Lower lobe of right lung (tissue), 2 donors: ENCODE measurements at regions of chr9 and their contacts with region 1.

Region 1: DNA sequence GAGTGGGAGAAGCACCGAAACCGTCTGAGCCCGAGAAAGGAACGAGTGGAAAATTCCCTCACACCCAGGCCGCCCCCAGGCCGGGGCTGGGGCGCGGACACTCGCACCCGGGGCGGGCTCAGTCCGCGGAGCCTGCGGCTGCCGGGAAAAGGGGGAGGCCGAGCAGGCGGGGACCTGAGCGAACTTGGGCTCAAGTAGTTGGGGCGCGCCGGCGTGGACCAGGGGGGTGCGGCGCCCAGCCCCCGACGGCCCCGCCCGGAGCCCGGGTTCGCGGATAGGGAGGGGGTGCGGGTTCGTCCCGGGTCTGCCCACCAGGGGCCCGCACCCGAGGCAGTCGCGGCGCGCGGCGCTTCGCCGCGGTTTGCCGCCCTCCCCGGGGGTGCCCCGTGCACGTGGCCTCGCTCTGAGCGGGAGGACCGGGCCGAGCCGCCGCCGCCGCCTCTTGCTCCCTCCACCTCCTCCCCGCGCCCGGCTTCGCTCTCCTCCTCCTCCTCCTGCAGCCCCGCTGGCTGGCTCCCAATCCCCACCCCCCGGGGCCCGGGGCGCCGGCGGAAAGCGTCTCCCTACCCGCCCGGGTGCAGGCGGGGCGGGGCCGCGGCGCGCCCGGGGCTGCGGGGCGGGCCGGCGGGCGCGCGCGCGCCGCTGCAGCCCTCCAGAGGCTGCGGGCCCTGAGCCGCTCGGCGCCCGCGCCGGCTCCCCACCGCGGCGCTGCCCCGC is 1.1 kb upstream of the NFIB start:
- DNase-seq: peak; percentile 93
- ATAC-seq: peak; percentile 82 to 89
- H3K4me3 ChIP-seq: peak overlapping the region; percentile 71
- H3K27ac ChIP-seq: peak overlapping the region; percentile 93
- H3K4me1 ChIP-seq: peaks cover 39% of the 10 kb centered on the region
- H3K27me3 ChIP-seq: no peaks in the 10 kb centered on the region
- CTCF ChIP-seq: no peak

Region 2: GRCh38 chr9:14096258-14096922 is 218.7 kb before region 1 on chr9:
- intact Hi-C with region 1: loop called (anchors 10 kb)
- DNase-seq: no peak
- ATAC-seq: peak; percentile 69 to 91
- H3K4me3 ChIP-seq: peak overlapping the region; percentile 9
- H3K27ac ChIP-seq: peak overlapping the region; percentile 81
- H3K4me1 ChIP-seq: peaks cover 40% of the 10 kb centered on the region
- H3K27me3 ChIP-seq: no peaks in the 10 kb centered on the region
- CTCF ChIP-seq: no peak

Region 3: GRCh38 chr9:14170973-14171596 is 144.0 kb before region 1 on chr9:
- intact Hi-C with region 1: no loop called
- DNase-seq: no peak
- ATAC-seq: no peak
- H3K4me3 ChIP-seq: no peak overlapping the region
- H3K27ac ChIP-seq: no peak overlapping the region
- H3K4me1 ChIP-seq: no peaks in the 10 kb centered on the region
- H3K27me3 ChIP-seq: no peaks in the 10 kb centered on the region
- CTCF ChIP-seq: no peak

Region 4: GRCh38 chr9:14245901-14246525 is 69.1 kb before region 1 on chr9:
- intact Hi-C with region 1: no loop called
- DNase-seq: no peak
- ATAC-seq: no peak
- H3K4me3 ChIP-seq: no peak overlapping the region
- H3K27ac ChIP-seq: no peak overlapping the region
- H3K4me1 ChIP-seq: peaks cover 31% of the 10 kb centered on the region
- H3K27me3 ChIP-seq: no peaks in the 10 kb centered on the region
- CTCF ChIP-seq: no peak

Region 5: GRCh38 chr9:14561929-14562405 is 246.9 kb after region 1 on chr9:
- intact Hi-C with region 1: no loop called
- DNase-seq: no peak
- ATAC-seq: no peak
- H3K4me3 ChIP-seq: no peak overlapping the region
- H3K27ac ChIP-seq: no peak overlapping the region
- H3K4me1 ChIP-seq: no peaks in the 10 kb centered on the region
- H3K27me3 ChIP-seq: no peaks in the 10 kb centered on the region
- CTCF ChIP-seq: no peak

Region 6: DNA sequence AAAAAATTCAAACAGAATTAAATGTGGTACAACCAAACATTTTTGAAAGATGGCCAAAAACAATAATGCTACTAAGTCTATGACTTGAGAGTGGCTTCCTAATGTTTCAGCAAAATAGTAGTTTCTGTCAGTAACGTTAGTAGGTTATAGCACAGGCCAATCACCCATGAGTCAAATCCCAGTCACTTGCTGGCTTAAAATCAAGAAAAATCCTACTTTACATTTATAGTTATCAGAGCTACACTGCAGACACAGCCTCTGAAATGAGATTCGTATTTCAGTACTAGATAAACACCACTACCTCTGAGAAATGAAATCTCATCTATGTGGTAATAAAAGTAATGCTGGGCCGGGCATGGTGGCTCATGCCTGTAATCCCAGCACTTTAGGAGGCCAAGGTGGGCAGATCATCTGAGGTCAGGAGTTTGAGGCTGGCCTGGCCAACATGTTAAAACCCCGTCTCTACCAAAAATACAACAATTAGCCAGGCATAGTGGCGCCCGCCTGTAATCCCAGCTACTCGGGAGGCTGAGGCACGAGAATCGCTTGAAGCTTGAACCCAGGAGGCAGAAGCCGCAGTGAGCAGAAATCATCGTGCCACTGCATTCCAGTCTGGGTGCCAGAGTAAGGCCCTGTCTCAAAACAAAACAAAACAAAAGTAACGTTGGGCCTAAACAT is 372.1 kb after region 1 on chr9:
- intact Hi-C with region 1: no loop called
- DNase-seq: no peak
- ATAC-seq: no peak
- H3K4me3 ChIP-seq: no peak overlapping the region
- H3K27ac ChIP-seq: no peak overlapping the region
- H3K4me1 ChIP-seq: peaks cover 8% of the 10 kb centered on the region
- H3K27me3 ChIP-seq: no peaks in the 10 kb centered on the region
- CTCF ChIP-seq: no peak